ENCODE measurements at regions of chr9 and their contacts with region 1.

Region 1: DNA sequence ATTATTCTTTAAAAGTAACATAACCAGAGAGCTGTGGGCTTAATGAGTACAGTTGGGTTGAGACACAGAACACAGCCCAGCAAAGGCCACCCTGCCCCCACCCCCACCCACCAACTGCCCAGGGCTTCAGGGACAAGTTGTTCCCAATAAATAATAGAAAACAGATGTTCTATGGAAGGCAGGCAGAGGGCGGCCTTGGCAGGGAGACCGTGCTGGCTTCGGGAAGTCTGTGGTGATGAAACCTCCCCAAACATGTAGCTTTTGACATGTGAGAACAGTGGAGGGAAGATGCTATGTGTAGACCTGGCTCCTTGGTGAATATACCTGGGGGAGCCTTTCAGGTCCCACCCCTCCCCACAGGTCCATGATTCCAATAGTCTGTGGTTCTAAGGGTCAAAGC is 10.0 kb downstream of the TRAF1 start:
- DNase-seq: peak; percentile 61 to 92
- H3K4me3 ChIP-seq: no peak overlapping the region
- H3K27ac ChIP-seq: peak overlapping the region; percentile 97 to 98
- H3K4me1 ChIP-seq: peaks cover 31 to 56% of the 10 kb centered on the region in 2 donors
- H3K27me3 ChIP-seq: no peaks in the 10 kb centered on the region
- CTCF ChIP-seq: peak; percentile 20 to 39 (median 27)

Region 2: GRCh38 chr9:120714088-120714845 is 202.3 kb before region 1 on chr9 and contains the start of gene MEGF9:
- intact Hi-C with region 1: no loop called
- DNase-seq: peak; percentile 95 to 99
- H3K4me3 ChIP-seq: peak within 1 kb of the TSS; percentile 70 to 82
- H3K27ac ChIP-seq: peak within 1 kb of the TSS; percentile 64 to 73
- H3K4me1 ChIP-seq: peaks cover 4 to 7% of the 10 kb centered on the region in 2 donors
- H3K27me3 ChIP-seq: no peaks in the 10 kb centered on the region
- CTCF ChIP-seq: peak in 1 of 3 experiments; percentile 9
- total RNA-seq, gene MEGF9: 14.3 TPM

Region 3: DNA sequence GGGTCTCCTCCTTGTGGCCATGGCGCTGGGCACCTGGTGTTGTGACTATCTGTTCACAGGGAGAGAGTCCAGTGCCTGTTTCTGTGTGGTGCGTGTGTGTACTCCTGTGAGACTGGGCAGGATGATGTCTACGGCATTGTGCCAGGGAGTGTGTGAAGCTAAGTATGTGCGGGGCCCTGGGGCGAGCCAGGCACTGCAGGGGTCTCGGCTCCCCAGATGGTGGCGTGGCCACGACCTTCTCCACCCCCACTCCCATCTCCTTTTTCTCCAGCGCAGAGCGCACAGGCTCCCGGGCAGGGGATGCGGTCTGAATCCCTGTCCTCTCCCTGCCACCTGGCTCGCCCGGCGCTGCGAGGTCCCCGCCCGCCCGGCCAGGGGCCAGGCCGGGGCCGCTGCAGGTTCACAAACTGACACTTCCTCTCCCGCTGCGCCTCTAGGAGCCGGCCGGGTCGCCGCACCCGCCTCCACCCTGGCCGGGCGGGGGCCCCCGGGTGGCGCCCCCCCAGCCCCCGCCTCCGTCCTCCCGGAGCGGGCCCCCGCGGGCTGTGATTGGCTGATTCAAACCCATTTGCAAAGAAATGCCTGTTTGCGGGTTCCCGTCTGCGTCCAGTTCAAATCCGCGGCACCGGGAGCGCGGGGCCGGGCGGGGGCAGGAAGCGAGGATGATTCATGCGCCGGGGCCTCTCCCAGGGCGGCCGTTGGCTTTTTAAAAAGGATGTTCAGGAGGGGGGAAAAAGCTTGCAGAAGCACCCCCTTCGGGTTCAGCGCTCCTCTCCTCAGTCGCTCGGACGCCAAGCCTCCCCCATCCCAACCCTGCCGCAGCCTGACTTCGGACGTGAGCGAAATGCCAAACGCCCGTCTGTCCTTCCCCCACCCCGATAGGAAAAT is 40.4 kb before region 1 on chr9:
- intact Hi-C with region 1: loop called (anchors 5 kb)
- DNase-seq: peak; percentile 73 to 96
- H3K4me3 ChIP-seq: peak overlapping the region; percentile 80 to 91
- H3K27ac ChIP-seq: peak overlapping the region; percentile 96 to 99
- H3K4me1 ChIP-seq: peaks cover 4 to 11% of the 10 kb centered on the region in 2 donors
- H3K27me3 ChIP-seq: no peaks in the 10 kb centered on the region
- CTCF ChIP-seq: no peak

Region 4: DNA sequence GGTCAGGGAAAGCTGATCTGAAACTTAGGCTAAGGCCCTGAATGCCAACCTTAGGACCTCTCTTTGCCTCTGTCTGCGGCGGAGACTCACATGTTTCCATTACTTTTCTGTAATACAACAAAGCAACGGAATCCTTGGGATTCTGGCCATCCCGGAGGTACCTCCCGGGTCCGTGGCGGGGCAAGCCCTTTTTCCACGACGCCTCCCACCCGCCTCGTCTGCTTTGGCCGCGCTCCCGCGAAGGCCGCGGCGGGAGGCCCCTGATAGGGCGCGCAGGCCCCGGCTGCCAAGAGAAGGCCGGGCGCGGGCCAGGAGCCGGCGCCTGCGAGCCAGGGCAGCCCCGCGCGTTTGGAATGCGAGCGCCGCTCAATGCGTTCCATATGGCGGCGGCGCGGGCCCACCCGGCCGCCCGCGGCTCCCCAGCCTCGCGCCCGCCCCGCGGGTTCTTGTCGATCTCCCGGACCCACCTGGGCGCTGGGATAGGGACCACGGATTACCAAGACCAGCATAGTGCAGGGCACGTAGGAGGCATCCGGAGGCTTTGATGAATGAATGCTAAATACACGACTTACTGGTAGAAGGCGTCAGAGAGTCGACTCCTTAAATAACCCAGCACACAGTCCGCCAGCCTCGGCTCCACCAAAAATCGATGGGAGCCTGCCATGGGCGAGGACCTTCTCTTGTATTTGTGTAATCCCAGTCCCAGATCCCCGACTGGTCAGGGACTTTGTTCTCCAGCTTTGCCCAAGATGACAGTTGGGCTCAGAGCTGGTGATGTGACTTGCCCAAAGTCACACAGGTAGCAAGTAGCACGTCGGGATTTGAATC is 22.1 kb before region 1 on chr9:
- intact Hi-C with region 1: loop called (anchors 2 kb)
- DNase-seq: peak in 1 of 2 donors; percentile 78
- H3K4me3 ChIP-seq: peak overlapping the region; percentile 32 to 53
- H3K27ac ChIP-seq: peak overlapping the region; percentile 90
- H3K4me1 ChIP-seq: peaks cover 7 to 39% of the 10 kb centered on the region in 2 donors
- H3K27me3 ChIP-seq: no peaks in the 10 kb centered on the region
- CTCF ChIP-seq: no peak

Region 5: DNA sequence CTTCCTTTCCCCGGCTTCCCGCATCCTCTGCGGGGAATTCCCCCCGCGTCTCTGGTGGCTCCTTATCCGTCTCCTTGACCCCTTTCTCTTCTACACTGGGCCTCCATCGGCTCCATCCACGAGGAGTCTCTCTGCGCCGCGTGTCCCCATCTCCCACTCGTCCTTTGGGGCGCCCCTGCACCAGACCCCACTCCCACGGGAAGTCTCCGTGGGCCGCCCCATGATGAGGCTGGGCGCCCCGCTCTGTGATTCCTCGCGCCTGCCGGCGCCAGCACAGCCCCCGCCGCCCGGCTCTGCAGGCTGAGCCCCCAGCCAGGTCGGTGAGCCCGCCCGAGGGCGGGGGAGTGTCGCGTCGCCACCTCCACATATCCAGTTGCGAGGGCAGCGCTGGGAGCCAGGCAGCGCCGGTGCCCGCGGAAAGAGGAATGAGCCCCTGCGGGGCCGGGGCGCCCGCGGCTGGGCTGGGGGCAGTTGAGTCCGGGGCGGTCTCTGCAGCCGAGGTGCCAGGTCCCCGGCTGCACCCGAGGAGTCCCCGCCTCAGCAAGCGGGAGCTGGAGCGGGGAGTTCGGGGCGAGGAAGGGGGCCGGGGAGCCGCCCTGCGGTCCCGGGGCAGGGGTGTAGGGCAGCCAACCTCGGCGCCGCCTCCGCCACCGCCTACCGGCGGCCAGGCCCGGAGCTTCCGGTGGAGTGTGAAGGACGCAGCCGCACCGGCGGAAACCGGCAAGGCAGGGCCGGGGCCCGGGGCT is 12.1 kb after region 1 on chr9:
- intact Hi-C with region 1: loop called (anchors 1 kb)
- DNase-seq: peak in 1 of 2 donors; percentile 85
- H3K4me3 ChIP-seq: peak overlapping the region; percentile 69 to 84
- H3K27ac ChIP-seq: peak overlapping the region; percentile 97 to 98
- H3K4me1 ChIP-seq: peaks cover 28 to 76% of the 10 kb centered on the region in 2 donors
- H3K27me3 ChIP-seq: no peaks in the 10 kb centered on the region
- CTCF ChIP-seq: no peak

Measured in ascending aorta (tissue), 2 donors.